Activated CD4-positive, alpha-beta T cell treated with anti-CD3 and anti-CD28 coated beads for 36 hours (primary cell): ENCODE measurements at regions of chr9 and their contacts with region 1.

Region 1: DNA sequence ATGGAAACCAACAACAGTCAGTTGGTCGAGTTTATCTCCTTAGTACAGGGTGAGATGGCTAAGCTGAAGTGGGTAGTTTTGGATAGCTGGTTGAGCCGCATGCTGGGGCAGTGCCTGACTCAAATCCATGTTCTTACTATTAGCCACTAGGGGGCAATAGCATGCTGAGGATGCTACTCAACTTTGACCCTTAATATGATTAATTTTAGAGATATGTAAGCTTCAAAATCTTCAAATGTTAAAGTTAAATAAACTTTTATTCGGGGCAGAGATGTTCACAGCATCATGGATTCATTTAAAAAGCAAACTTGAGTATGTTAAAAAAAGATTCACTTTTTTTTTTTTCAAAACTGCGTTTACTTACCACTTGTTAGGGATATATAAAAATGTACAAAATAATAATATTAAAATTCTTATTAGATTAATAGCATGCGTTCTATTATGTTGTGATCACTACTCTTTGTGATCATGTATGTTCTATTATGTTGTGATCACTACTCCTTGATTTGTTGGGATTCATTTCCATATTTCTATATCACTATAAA is 57.0 kb downstream of the C9orf153 start:
- DNase-seq: peak; percentile 30
- ATAC-seq: peak; percentile 57
- H3K4me3 Mint-ChIP-seq: no peak overlapping the region
- H3K27ac Mint-ChIP-seq: no peak overlapping the region
- H3K4me1 Mint-ChIP-seq: peaks cover 3% of the 10 kb centered on the region
- H3K27me3 Mint-ChIP-seq: peaks cover 6% of the 10 kb centered on the region

Region 2: DNA sequence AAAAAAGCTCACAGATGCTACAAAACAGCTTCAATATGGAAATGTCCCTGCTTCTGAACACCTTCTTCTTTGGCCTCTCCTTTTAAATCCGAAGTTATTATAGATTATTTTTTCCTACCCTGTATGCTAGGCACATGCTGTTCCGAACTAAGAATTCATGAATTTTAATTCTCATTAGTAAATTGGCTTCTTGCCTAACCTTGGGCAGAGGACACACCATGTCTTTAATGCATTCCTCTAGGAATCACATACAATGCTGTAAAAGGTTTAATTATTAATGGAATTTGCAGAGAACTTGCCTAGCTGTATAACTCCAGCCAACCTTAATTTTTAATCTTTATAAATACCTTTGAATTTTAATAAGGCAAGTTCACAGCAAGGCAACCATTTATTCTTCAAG is 1298.4 kb before region 1 on chr9:
- CTCF ChIA-PET with region 1: no interaction called
- POLR2A ChIA-PET with region 1: no interaction called
- intact Hi-C with region 1: no loop called
- DNase-seq: no peak
- ATAC-seq: no peak
- H3K4me3 Mint-ChIP-seq: no peak overlapping the region
- H3K27ac Mint-ChIP-seq: no peak overlapping the region
- H3K4me1 Mint-ChIP-seq: no peaks in the 10 kb centered on the region
- H3K27me3 Mint-ChIP-seq: peaks cover 4% of the 10 kb centered on the region

Region 3: DNA sequence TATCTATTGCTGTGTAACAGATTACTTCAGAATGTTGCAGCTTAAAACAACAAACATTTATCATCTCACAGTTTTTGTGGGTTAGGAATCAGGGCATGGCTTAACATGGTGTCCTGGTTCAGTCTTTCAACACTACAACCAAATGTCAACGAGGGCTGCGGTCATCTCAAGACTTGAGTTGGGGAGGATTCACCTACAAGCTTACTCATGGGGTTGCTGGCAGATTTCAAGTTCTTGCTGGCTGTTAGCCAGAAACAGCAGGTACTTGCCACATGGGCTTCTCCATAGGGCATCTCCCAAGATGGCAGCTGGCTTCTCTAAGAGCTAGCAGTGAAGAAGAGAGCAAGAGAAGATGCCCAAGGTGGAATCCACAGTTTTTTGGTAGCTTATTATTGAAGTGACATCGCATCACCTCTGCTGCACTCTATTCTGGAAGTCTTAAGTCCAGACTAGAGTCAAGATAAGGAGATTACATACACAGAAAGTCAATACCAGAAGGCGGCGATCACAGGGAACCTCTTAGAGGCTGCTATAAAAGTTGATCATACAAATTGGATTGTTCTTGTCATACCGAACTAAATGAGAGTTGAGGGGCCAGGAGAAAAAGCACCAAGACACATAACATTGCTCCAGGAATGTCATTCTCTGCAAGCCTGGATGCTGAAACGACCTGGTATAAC is 14.8 kb after region 1 on chr9:
- CTCF ChIA-PET with region 1: interaction called, 20 read pairs
- POLR2A ChIA-PET with region 1: no interaction called
- intact Hi-C with region 1: no loop called
- DNase-seq: no peak
- ATAC-seq: no peak
- H3K4me3 Mint-ChIP-seq: no peak overlapping the region
- H3K27ac Mint-ChIP-seq: no peak overlapping the region
- H3K4me1 Mint-ChIP-seq: no peaks in the 10 kb centered on the region
- H3K27me3 Mint-ChIP-seq: no peaks in the 10 kb centered on the region

Region 4: GRCh38 chr9:86238861-86239770 is 36.7 kb after region 1 on chr9:
- CTCF ChIA-PET with region 1: interaction called, 6 read pairs
- POLR2A ChIA-PET with region 1: no interaction called
- intact Hi-C with region 1: loop called in 1 of 2 experiments (anchors 2 kb)
- DNase-seq: no peak
- ATAC-seq: no peak
- H3K4me3 Mint-ChIP-seq: no peak overlapping the region
- H3K27ac Mint-ChIP-seq: no peak overlapping the region
- H3K4me1 Mint-ChIP-seq: peaks cover 5% of the 10 kb centered on the region
- H3K27me3 Mint-ChIP-seq: no peaks in the 10 kb centered on the region